ENCODE measurements at regions of chr11 and their contacts with region 1.

Region 1: GRCh38 chr11:12029738-12030363 is 21.4 kb upstream of the DKK3 start:
- DNase-seq: no peak
- ATAC-seq: no peak
- H3K4me3 ChIP-seq: no peak overlapping the region
- H3K27ac ChIP-seq: no peak overlapping the region
- H3K4me1 ChIP-seq: no peaks in the 10 kb centered on the region
- H3K27me3 ChIP-seq: no peaks in the 10 kb centered on the region

Region 2: DNA sequence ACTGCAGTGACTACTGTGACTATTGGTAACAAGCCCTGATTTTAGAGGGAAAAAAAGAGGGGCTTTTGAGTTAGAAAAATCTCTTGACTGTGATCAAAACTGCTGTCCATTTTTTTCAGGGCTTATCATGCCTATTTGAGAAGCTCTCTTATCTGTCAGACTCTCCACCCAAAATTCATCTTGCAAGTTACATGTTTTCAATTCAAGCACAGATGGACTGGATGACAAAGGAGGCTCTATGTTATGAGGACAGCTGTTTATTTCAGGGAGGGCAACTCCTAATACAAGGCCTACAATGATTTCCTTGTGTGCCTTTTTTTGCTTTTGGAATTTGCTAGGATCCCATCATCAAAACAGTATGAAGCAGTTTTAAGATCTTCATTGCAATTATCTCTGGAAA is 223.3 kb before region 1 on chr11:
- intact Hi-C with region 1: loop called in 1 of 4 experiments (anchors 10 kb)
- DNase-seq: no peak
- ATAC-seq: peak; percentile 40 to 54
- H3K4me3 ChIP-seq: no peak overlapping the region
- H3K27ac ChIP-seq: no peak overlapping the region
- H3K4me1 ChIP-seq: no peaks in the 10 kb centered on the region
- H3K27me3 ChIP-seq: no peaks in the 10 kb centered on the region

Region 3: DNA sequence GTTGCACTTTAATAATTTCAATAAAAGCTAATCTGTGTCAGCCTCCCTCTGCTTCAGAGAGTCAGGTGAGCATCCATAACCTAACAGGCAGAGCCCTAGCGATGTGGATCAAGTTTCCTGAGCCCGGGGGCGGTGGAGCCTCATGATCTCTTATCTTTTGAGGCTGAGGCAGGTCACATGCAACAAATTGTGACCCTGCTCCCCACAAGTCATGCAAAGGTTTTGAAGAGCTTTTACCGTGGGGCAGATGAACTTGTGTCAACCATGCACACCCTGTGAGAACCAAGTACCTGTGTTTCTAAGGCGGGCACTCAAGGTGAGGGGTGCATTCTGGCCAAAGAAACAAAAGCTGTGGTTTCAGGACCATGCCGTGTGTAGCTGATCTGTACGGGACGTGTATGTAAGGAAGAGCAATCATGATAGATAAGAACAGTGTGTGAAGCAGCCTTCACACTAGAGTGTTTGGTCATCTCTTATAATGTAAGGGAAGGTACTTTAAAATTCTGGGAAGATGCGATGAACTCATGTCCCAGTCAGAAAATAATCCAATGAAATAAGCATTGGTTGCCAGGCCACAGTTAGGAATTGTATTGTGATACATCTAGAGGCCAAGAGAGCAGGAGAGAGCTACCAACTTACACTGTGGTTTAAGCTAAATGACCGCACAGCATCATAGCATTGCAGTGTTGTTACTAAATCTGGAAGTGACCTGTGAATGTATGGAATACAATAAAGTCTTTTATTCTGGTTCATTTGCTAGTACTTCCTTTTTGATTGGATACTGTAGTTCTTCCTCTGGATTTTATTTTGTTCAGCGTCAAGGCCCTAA is 71.2 kb before region 1 on chr11:
- intact Hi-C with region 1: loop called in 1 of 4 experiments (anchors 10 kb)
- DNase-seq: no peak
- ATAC-seq: no peak
- H3K4me3 ChIP-seq: no peak overlapping the region
- H3K27ac ChIP-seq: no peak overlapping the region
- H3K4me1 ChIP-seq: peaks cover 2% of the 10 kb centered on the region
- H3K27me3 ChIP-seq: no peaks in the 10 kb centered on the region

Region 4: DNA sequence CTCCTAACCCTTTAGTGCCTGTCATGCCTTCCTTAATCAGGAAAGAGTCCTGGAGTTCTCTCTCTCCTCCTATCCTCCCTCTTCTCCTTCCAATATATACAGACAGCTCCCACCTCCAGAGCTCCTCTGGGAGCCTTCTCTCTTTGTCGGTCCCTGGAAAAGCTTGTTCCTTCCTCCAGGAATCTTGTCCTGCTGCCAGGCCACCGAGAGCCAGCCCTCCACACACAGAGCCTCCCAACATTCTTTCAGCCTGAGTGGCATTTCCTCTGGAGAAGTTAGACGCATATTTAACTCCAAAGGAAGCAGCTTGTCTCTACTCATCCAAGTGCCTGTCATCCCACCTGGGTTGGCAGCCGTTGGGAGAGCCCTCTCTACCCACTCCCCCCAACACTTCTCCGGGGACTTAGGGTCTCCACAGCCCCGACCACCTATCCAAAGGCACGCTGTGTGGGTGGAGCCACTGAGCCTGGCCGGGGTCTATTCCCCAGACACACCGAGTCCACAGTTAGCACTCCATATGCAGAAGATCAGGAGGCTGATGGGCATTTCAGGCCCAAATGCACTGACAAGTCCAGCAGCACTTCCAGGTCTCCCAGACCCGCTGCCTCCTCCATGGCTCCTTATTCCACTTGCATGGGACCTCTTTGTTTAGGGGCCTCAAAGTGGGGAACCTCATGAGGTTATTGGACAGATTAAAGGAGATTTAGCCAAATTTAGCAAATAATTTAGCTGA is 52.5 kb before region 1 on chr11:
- intact Hi-C with region 1: loop called in 1 of 4 experiments (anchors 10 kb)
- DNase-seq: peak; percentile 81 to 91 (median 85)
- ATAC-seq: peak; percentile 47 to 64
- H3K4me3 ChIP-seq: no peak overlapping the region
- H3K27ac ChIP-seq: peak overlapping the region; percentile 91
- H3K4me1 ChIP-seq: peaks cover 66% of the 10 kb centered on the region
- H3K27me3 ChIP-seq: no peaks in the 10 kb centered on the region

Region 5: DNA sequence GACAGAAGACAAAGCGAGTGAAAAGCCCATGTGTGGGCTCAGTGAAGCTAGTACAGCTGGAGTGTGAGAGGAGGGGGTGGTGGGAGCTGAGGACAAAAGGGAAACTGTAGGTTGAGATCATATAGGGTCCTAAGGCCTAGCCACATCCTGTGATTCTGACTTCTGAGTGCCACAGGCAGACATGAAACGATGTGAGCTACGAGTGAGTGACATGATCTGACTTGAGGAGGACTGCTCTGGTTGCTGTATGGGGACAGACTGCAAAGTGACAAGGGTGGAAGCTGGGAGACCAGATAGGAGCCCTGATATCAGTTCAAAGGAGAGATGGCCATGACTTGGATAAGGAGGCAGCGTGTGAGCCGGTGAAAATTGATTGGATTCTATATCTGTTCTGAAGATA is 165.9 kb after region 1 on chr11:
- intact Hi-C with region 1: no loop called
- DNase-seq: no peak
- ATAC-seq: no peak
- H3K4me3 ChIP-seq: no peak overlapping the region
- H3K27ac ChIP-seq: no peak overlapping the region
- H3K4me1 ChIP-seq: peaks cover 25% of the 10 kb centered on the region
- H3K27me3 ChIP-seq: no peaks in the 10 kb centered on the region